Motor neuron (in vitro differentiated cells): ENCODE measurements at regions of chr2 and their contacts with region 1.

Region 1: GRCh38 chr2:11778923-11779757 is 32.7 kb downstream of the LPIN1 start:
- ATAC-seq: peak; percentile 82 to 93 (median 86)
- H3K4me3 ChIP-seq: no peak overlapping the region
- H3K27ac ChIP-seq: no peak overlapping the region
- H3K4me1 ChIP-seq: no peaks in the 10 kb centered on the region

Region 2: DNA sequence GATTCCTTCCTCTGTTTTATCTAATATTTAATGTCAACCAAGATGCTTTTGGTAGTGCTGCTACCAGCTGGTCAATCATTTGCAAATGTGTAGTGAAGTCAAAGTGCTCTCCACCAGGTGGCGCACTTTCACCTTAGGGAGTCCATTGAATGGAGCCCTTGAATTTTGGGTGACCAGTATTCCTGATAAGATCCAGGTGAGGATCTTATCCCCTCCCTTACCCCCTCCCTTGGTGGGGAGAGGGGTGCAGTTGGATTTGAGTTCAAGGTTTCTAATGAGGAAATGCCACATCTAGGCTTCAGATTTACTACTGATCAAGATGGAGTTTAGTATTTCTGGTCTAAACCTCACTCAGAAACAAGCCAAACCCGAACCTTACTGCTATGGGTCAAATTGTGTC is 301.1 kb before region 1 on chr2:
- in situ Hi-C with region 1: loop called in 1 of 9 experiments (anchors 25 kb)
- ATAC-seq: peak in 3 of 8 experiments; percentile 53 to 77 (median 77)
- H3K4me3 ChIP-seq: no peak overlapping the region
- H3K27ac ChIP-seq: no peak overlapping the region
- H3K4me1 ChIP-seq: peaks cover 38 to 41% of the 10 kb centered on the region in 2 donors